ENCODE measurements at regions of chr17 and their contacts with region 1.

Region 1: GRCh38 chr17:2244545-2245525 is 58.8 kb downstream of the SMG6 start:
- DNase-seq: no peak
- ATAC-seq: peak; percentile 88
- H3K4me3 ChIP-seq: no peak overlapping the region
- H3K27ac ChIP-seq: peak overlapping the region; percentile 84
- H3K4me1 ChIP-seq: peaks cover 25% of the 10 kb centered on the region
- H3K27me3 ChIP-seq: no peaks in the 10 kb centered on the region
- CTCF ChIP-seq: peak; percentile 97 to 98 (median 98); a peak in 5 of 6 replicates
- EP300 ChIP-seq: no peak
- POLR2A ChIP-seq: no peak
- RAD21 ChIP-seq: peak; percentile 100

Region 2: DNA sequence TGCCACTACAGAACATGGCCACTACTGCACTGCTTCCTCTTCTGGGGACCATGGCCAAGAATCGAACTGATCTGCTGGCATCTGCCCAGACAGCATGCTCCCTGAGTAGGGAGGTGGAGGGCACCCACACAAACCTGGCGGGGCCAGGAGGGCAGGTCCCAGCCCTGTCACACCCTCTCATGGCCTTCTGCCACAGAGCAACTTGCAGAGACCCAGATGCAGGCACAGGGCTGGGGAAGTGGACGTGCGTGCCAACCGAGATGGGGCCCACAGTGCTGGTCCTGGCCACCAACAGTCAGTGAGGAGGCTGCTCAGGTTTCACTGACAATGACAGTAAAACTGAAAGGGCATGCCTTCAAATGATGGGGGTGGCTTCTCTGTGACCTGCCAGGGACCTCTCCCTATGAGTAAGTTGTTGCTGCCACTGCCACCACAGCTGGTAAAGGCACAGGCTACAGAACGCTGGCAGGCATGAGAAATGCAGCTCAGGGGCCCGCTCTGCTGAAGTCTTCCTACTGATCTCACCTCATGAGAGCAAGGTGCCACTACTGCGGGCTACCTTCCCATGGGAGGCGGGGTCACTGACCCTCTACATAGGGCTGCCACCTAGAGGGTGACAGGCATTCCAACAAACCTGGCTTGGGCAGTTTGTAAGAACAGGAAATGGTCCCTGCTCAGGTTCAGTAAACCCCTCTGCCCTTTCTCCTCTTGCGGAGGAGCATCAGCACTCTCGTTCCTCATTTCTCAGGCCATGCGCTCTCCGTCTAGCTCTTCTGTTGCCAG is 174.4 kb before region 1 on chr17:
- CTCF ChIA-PET with region 1: interaction called, 35 read pairs
- POLR2A ChIA-PET with region 1: interaction called, 3 read pairs
- RAD21 ChIA-PET with region 1: interaction called, 12 read pairs
- SMC1A ChIA-PET with region 1: interaction called, 30 read pairs
- in situ Hi-C with region 1: loop called (anchors 10 kb)
- intact Hi-C with region 1: loop called (anchors 5 kb)
- DNase-seq: peak; percentile 96
- ATAC-seq: peak; percentile 93
- H3K4me3 ChIP-seq: peak overlapping the region; percentile 1; the same call in 1 of the 2 replicates
- H3K27ac ChIP-seq: peak overlapping the region; percentile 95
- H3K4me1 ChIP-seq: peaks cover 43% of the 10 kb centered on the region
- H3K27me3 ChIP-seq: no peaks in the 10 kb centered on the region
- CTCF ChIP-seq: peak in 2 of 3 experiments; percentile 7 to 22; a peak in 1 of 6 replicates
- EP300 ChIP-seq: peak; percentile 96 to 99
- POLR2A ChIP-seq: peak; percentile 79
- RAD21 ChIP-seq: 0 out of 2 replicates have a peak, but pooled peaks have one; percentile 0

Region 3: DNA sequence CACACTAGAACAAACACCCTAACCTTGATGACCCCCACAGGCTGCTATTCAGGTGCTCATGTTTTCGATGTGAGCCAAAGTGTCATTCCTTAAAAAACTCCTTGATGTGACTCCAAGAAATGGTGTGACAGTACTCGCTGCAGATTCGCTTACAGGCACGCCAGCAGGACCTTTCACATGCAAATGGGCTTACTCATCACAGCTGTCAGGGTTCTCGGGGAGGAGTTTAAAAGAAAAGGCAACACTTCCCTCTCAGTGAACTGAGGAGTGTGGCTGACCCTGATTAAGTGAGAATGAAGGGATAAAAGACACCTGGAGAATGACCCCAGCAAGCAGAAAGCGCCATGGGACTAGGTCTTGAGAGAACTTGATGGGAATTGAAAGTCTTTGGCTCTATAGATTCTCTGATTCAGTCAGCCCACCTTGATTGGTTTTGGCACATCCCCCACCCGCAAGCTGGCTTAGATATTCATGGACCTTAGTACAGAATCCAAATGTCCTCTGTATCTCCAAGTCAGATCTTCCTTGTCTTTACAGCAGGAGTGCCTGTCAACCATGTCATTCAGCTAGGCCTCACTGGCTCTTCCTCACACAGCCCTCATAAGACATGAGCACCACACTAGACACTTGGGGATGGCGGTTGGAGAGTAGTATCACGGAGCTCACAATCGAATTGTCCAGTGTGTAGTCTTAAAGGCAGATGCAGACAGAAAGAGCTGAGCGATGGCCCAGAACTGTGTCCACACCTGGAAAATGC is 107.3 kb before region 1 on chr17:
- CTCF ChIA-PET with region 1: interaction called, 16 read pairs
- POLR2A ChIA-PET with region 1: no interaction called
- RAD21 ChIA-PET with region 1: interaction called, 18 read pairs
- SMC1A ChIA-PET with region 1: interaction called, 8 read pairs
- in situ Hi-C with region 1: no loop called
- intact Hi-C with region 1: no loop called
- DNase-seq: peak; percentile 51
- ATAC-seq: peak; percentile 86
- H3K4me3 ChIP-seq: no peak overlapping the region; the same call in 1 of the 2 replicates
- H3K27ac ChIP-seq: peak overlapping the region; percentile 87
- H3K4me1 ChIP-seq: peaks cover 41% of the 10 kb centered on the region
- H3K27me3 ChIP-seq: no peaks in the 10 kb centered on the region
- CTCF ChIP-seq: no peak
- EP300 ChIP-seq: no peak
- POLR2A ChIP-seq: peak; percentile 23; the same call in 1 of the 2 replicates
- RAD21 ChIP-seq: no peak

Region 4: DNA sequence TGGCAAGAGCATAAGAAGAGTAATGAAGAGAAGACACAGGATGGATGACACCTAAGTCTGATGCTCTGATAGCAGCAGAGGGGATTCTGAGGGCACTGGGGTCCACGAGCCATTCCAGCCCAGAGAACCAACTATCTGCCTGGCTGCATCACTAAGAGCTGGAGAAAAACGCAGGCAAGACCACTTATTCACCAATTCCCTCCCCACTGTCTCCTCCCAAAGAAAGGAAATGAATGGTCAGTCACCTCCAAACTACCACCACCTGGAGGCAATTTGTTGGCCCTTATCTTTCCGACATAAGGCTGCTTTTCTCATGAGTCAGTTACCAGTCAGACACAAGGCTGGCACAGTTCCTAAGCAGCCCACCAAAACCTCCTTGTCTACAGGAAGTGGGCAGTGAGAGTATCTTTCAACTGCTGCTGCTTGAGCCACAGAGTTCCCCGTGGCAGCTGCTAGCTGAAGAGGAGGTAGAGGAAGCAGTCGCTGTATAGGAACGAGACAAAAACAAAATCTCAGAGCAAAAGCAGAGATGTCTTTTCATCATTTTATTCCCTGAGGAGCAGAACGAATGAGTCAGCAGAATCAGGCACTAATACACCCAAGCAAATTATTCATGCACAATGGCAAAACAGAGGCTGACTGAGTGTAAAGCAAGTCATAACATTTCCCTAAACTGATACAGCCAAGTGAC is 52.3 kb before region 1 on chr17:
- CTCF ChIA-PET with region 1: interaction called, 18 read pairs
- POLR2A ChIA-PET with region 1: no interaction called
- RAD21 ChIA-PET with region 1: interaction called, 8 read pairs
- SMC1A ChIA-PET with region 1: interaction called, 7 read pairs
- in situ Hi-C with region 1: no loop called
- intact Hi-C with region 1: loop called (anchors 5 kb)
- DNase-seq: peak; percentile 72
- ATAC-seq: peak; percentile 93
- H3K4me3 ChIP-seq: no peak overlapping the region
- H3K27ac ChIP-seq: peak overlapping the region; percentile 52
- H3K4me1 ChIP-seq: peaks cover 35% of the 10 kb centered on the region
- H3K27me3 ChIP-seq: no peaks in the 10 kb centered on the region
- CTCF ChIP-seq: no peak
- EP300 ChIP-seq: no peak
- POLR2A ChIP-seq: no peak
- RAD21 ChIP-seq: no peak

Region 5: DNA sequence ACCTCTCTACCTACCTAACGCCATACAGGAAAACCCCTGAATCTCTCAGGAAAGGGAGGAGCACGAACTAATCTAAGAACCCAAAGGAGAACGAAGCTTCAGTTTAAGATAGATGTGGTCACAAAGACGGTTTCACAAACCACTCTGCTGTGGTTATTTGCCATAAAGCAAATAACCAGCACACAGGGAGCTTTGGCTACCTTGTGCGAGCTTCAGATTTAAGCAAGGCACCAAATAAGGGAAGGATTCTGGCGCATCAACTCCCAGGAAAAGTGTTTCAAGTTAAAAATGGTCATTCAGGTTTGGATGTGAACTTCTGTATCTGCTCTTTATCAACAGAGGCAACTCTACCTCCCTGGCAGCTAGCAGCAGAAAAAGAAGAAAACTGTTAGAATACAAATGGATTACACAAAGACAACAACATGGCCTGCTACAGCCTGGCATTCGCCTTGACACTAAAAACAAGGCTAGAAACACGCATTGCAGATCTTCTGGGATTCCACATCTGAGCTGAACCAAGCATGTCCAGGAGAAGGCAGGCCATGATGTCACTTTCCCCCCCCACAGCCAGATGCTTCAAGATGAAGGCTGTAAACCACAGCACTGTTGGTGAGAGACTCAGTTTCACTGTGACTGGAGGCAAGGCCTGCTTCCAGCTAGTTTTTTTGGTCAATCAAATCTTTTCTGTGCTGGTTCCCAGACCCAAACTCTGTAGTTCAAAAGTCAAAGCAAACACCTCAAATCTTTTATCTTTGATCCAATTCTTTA is 15.1 kb after region 1 on chr17:
- CTCF ChIA-PET with region 1: interaction called, 50 read pairs
- POLR2A ChIA-PET with region 1: interaction called, 30 read pairs
- RAD21 ChIA-PET with region 1: interaction called, 52 read pairs
- SMC1A ChIA-PET with region 1: interaction called, 149 read pairs
- in situ Hi-C with region 1: no loop called
- intact Hi-C with region 1: no loop called
- DNase-seq: peak; percentile 85
- ATAC-seq: peak; percentile 91
- H3K4me3 ChIP-seq: peak overlapping the region; percentile 44; the same call in 1 of the 2 replicates
- H3K27ac ChIP-seq: peak overlapping the region; percentile 99
- H3K4me1 ChIP-seq: peaks cover 64% of the 10 kb centered on the region
- H3K27me3 ChIP-seq: no peaks in the 10 kb centered on the region
- CTCF ChIP-seq: no peak
- EP300 ChIP-seq: peak; percentile 67 to 80
- POLR2A ChIP-seq: peak; percentile 61
- RAD21 ChIP-seq: no peak

Region 6: DNA sequence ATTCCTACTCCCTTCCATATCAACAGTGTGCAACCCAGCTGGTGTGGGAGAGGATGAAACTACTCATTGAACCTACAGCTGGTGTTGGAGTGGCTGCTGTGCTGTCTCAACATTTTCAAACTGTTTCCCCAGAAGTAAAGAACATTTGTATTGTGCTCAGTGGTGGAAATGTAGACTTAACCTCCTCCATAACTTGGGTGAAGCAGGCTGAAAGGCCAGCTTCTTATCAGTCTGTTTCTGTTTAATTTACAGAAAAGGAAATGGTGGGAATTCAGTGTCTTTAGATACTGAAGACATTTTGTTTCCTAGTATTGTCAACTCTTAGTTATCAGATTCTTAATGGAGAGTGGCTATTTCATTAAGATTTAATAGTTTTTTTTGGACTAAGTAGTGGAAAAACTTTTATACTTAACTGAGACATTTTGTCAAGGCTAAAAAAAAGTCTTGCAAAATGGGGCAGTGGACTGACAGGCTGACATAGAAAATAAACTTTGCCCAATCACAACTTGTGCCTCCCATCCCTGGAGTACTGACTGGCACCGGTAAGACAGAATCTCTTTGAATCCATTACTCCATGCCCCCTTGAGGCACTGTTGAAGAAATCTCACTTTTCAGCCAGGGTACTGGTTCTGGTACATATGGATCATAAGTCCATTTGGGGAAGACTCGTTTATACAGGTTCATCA is 78.9 kb after region 1 on chr17:
- CTCF ChIA-PET with region 1: no interaction called
- POLR2A ChIA-PET with region 1: no interaction called
- RAD21 ChIA-PET with region 1: no interaction called
- SMC1A ChIA-PET with region 1: no interaction called
- in situ Hi-C with region 1: no loop called
- intact Hi-C with region 1: no loop called
- DNase-seq: no peak
- ATAC-seq: no peak
- H3K4me3 ChIP-seq: no peak overlapping the region
- H3K27ac ChIP-seq: no peak overlapping the region
- H3K4me1 ChIP-seq: no peaks in the 10 kb centered on the region
- H3K27me3 ChIP-seq: no peaks in the 10 kb centered on the region
- CTCF ChIP-seq: no peak
- EP300 ChIP-seq: no peak
- POLR2A ChIP-seq: no peak
- RAD21 ChIP-seq: no peak

Region 7: DNA sequence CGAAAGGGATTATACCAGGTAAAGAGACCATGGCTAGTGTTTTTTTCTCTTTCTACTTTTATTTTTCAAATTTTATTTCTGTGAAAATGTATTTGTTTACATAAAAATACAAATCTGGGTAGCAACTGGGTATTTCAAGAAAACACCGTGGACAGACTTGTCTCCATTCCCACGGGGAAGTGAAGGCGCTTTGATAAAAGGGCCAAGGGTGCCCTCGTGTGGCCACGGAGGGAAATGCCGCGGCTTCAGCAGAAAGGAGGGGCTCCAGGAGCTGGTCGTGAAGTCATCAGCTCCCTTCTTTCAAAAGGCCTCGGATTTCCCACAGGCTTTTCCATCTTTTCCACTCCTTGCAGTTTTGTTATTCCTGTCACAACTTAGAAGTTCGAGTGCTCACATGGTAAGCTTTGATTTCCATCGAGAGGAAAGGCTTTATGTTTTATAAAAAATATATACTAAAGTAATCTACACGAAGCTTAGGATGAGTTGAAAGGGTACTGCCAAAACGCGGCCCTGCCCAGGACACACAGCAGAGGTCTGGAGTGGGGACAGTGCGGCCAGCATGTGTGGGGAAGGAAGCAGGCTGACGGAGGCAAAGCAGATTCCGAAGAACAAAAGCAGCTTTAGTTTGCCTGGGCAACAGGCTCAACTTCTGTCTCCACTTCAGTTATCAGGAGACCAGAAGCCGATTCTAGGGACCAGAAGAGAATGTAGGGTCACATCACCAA is 171.3 kb after region 1 on chr17:
- CTCF ChIA-PET with region 1: interaction called, 3 read pairs
- POLR2A ChIA-PET with region 1: no interaction called
- RAD21 ChIA-PET with region 1: interaction called, 11 read pairs
- SMC1A ChIA-PET with region 1: no interaction called
- in situ Hi-C with region 1: no loop called
- intact Hi-C with region 1: no loop called
- DNase-seq: no peak
- ATAC-seq: peak; percentile 93
- H3K4me3 ChIP-seq: no peak overlapping the region
- H3K27ac ChIP-seq: no peak overlapping the region
- H3K4me1 ChIP-seq: no peaks in the 10 kb centered on the region
- H3K27me3 ChIP-seq: no peaks in the 10 kb centered on the region
- CTCF ChIP-seq: peak; percentile 97
- EP300 ChIP-seq: no peak
- POLR2A ChIP-seq: no peak
- RAD21 ChIP-seq: peak; percentile 88

Region 8: GRCh38 chr17:2453325-2453724 is 208.5 kb after region 1 on chr17:
- CTCF ChIA-PET with region 1: no interaction called
- POLR2A ChIA-PET with region 1: no interaction called
- RAD21 ChIA-PET with region 1: no interaction called
- SMC1A ChIA-PET with region 1: no interaction called
- in situ Hi-C with region 1: no loop called
- intact Hi-C with region 1: no loop called
- DNase-seq: no peak
- ATAC-seq: no peak
- H3K4me3 ChIP-seq: no peak overlapping the region
- H3K27ac ChIP-seq: no peak overlapping the region
- H3K4me1 ChIP-seq: peaks cover 12% of the 10 kb centered on the region
- H3K27me3 ChIP-seq: no peaks in the 10 kb centered on the region
- CTCF ChIP-seq: no peak
- EP300 ChIP-seq: no peak
- POLR2A ChIP-seq: no peak
- RAD21 ChIP-seq: no peak

Region 9: GRCh38 chr17:3207367-3207766 is 962.5 kb after region 1 on chr17 and contains the start of gene OR1A1:
- CTCF ChIA-PET with region 1: no interaction called
- POLR2A ChIA-PET with region 1: no interaction called
- RAD21 ChIA-PET with region 1: no interaction called
- SMC1A ChIA-PET with region 1: no interaction called
- in situ Hi-C with region 1: no loop called
- intact Hi-C with region 1: no loop called
- DNase-seq: no peak
- ATAC-seq: no peak
- H3K4me3 ChIP-seq: no peak within 1 kb of the TSS
- H3K27ac ChIP-seq: no peak within 1 kb of the TSS
- H3K4me1 ChIP-seq: no peaks in the 10 kb centered on the region
- H3K27me3 ChIP-seq: no peaks in the 10 kb centered on the region
- CTCF ChIP-seq: no peak
- EP300 ChIP-seq: no peak
- POLR2A ChIP-seq: no peak
- RAD21 ChIP-seq: no peak
- polyA plus RNA-seq, gene OR1A1: not detected

Measured in GM12878 (cell line).